H1 (cell line): ENCODE measurements at regions of chr1 and their contacts with region 1.

Region 1: DNA sequence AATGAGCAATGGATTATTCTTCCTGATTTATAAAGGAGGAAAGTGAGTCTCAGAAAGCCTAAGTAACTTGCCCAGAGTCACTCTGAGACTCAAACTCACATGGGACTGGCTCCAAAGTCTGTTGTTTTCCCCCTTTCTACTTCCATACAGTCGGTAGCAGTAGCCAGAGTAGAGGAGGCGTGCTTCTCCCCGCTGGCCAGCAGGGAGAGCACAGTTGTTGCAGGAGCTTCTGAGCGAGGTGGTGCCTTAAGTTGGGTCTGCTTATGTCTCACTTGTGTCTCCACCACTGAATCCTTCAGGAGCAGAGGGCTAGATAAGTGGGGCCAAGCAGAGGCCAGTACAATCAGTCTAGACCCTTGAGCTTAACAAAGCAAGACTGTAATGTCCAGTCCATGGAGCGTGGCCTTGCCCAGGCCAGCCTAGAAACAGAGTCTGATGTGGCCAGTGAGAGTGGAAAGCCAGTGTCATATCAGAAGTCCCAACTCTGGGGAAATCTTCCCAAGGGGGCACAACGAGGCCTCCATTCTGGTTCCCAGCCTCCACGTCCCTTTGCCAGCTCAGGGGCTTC is 181.9 kb downstream of the ZSCAN20 start:
- DNase-seq: no peak
- H3K4me3 ChIP-seq: no peak overlapping the region
- H3K27ac ChIP-seq: no peak overlapping the region
- H3K4me1 ChIP-seq: no peaks in the 10 kb centered on the region
- H3K27me3 ChIP-seq: no peaks in the 10 kb centered on the region
- CTCF ChIP-seq: peak; percentile 58 to 76 (median 71)
- EP300 ChIP-seq: no peak
- POLR2A ChIP-seq: no peak
- RAD21 ChIP-seq: peak; percentile 56 to 69

Region 2: GRCh38 chr1:33724348-33724747 is 70.0 kb after region 1 on chr1:
- CTCF ChIA-PET with region 1: interaction called, 14 read pairs
- POLR2A ChIA-PET with region 1: no interaction called
- DNase-seq: peak in 1 of 2 experiments; percentile 60
- H3K4me3 ChIP-seq: no peak overlapping the region
- H3K27ac ChIP-seq: no peak overlapping the region
- H3K4me1 ChIP-seq: no peaks in the 10 kb centered on the region
- H3K27me3 ChIP-seq: no peaks in the 10 kb centered on the region
- CTCF ChIP-seq: peak; percentile 53 to 61 (median 56)
- EP300 ChIP-seq: no peak
- POLR2A ChIP-seq: no peak
- RAD21 ChIP-seq: peak; percentile 46 to 53